ENCODE measurements at regions of chr10 and their contacts with region 1.

Region 1: GRCh38 chr10:98041372-98042043 is 11.1 kb upstream of the CRTAC1 start:
- DNase-seq: peak; percentile 65 to 70 (median 69)
- ATAC-seq: peak; percentile 79 to 92 (median 82)
- H3K4me3 ChIP-seq: no peak overlapping the region
- H3K27ac ChIP-seq: no peak overlapping the region
- H3K4me1 ChIP-seq: no peaks in the 10 kb centered on the region
- H3K27me3 ChIP-seq: no peaks in the 10 kb centered on the region
- CTCF ChIP-seq: peak; percentile 69 to 85 (median 72)
- POLR2A ChIP-seq: no peak

Region 2: GRCh38 chr10:97914837-97915211 is 126.7 kb before region 1 on chr10:
- intact Hi-C with region 1: loop called (anchors 5 kb)
- DNase-seq: peak; percentile 79 to 84 (median 80)
- ATAC-seq: peak; percentile 85 to 91 (median 87)
- H3K4me3 ChIP-seq: no peak overlapping the region
- H3K27ac ChIP-seq: no peak overlapping the region
- H3K4me1 ChIP-seq: no peaks in the 10 kb centered on the region
- H3K27me3 ChIP-seq: no peaks in the 10 kb centered on the region
- CTCF ChIP-seq: peak; percentile 90 to 97 (median 95)
- POLR2A ChIP-seq: no peak

Region 3: GRCh38 chr10:97927622-97928021 is 113.9 kb before region 1 on chr10:
- intact Hi-C with region 1: loop called in 1 of 2 experiments (anchors 5 kb)
- DNase-seq: no peak
- ATAC-seq: no peak
- H3K4me3 ChIP-seq: no peak overlapping the region
- H3K27ac ChIP-seq: no peak overlapping the region
- H3K4me1 ChIP-seq: no peaks in the 10 kb centered on the region
- H3K27me3 ChIP-seq: no peaks in the 10 kb centered on the region
- CTCF ChIP-seq: no peak
- POLR2A ChIP-seq: no peak

Region 4: GRCh38 chr10:98316661-98317060 is 275.2 kb after region 1 on chr10:
- intact Hi-C with region 1: no loop called
- DNase-seq: no peak
- ATAC-seq: peak; percentile 59 to 82 (median 74)
- H3K4me3 ChIP-seq: no peak overlapping the region
- H3K27ac ChIP-seq: no peak overlapping the region
- H3K4me1 ChIP-seq: no peaks in the 10 kb centered on the region
- H3K27me3 ChIP-seq: no peaks in the 10 kb centered on the region
- CTCF ChIP-seq: no peak
- POLR2A ChIP-seq: no peak

Measured in right lobe of liver (tissue), 6 donors.